Heart left ventricle (tissue), 16 donors: ENCODE measurements at regions of chr19 and their contacts with region 1.

Region 1: DNA sequence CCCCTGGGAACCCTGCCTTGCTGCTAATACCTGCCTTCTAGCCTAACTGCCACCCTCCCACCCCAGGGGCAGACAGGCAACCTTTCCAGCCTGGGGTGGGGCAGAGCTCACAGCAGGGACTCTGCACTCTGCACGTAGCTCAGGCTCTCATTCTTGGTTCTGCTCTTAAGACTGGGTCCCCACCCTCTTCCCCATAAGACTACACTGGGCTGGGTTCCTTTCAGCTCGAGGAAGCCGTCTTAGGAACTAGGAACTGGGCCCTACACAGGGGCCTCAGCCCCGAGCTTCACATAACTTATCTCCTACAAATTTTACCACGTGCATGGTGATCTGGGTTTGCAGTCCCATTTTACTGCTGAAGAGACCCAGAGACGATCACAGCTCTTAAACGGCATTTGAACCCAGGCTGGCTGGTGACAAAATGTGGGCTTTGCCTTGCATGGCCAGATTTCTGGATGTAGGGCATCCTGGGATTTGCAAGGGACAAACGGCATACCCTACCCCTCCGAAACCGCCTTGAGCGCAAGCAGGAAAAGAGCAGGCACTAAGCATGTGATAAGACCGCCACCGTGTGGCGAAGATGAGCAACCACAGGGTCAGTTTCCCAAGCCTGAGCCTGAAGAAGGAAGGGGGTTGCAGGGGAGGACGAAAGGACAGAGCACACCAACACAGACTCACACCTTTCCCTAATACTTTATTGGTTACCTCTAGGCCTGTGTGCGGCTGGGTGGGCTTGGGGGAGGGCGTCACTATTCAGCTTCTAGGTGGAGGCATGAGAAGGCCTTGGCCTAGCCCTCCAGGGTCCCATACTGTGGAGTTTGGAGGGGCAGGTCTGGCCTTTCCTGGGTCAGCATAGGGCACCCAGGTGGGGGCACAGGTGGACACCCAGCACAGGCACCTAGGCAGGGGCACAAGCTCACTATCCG is 5.1 kb downstream of the JUNB start:
- DNase-seq: peak; percentile 74 to 87 (median 79)
- ATAC-seq: peak; percentile 12 to 21 (median 15)
- H3K4me3 ChIP-seq: peak overlapping the region in 4 of 12 donors; percentile 4 to 45 (median 24)
- H3K27ac ChIP-seq: peak overlapping the region in 11 of 12 donors; percentile 42 to 100 (median 57)
- H3K4me1 ChIP-seq: peaks cover 3 to 41% (median 23%) of the 10 kb centered on the region in 12 donors
- H3K27me3 ChIP-seq: peaks cover 0 to 3% (median 0%) of the 10 kb centered on the region in 9 donors
- CTCF ChIP-seq: peak; percentile 87 to 96 (median 92)
- POLR2A ChIP-seq: no peak

Region 2: GRCh38 chr19:12711187-12711586 is 85.2 kb before region 1 on chr19:
- intact Hi-C with region 1: loop called in 1 of 10 experiments (anchors 5 kb)
- DNase-seq: no peak
- ATAC-seq: no peak
- H3K4me3 ChIP-seq: no peak overlapping the region
- H3K27ac ChIP-seq: no peak overlapping the region
- H3K4me1 ChIP-seq: no peaks in the 10 kb centered on the region
- H3K27me3 ChIP-seq: no peaks in the 10 kb centered on the region
- CTCF ChIP-seq: no peak
- POLR2A ChIP-seq: no peak

Region 3: GRCh38 chr19:12757544-12758274 is 38.7 kb before region 1 on chr19:
- intact Hi-C with region 1: loop called in 8 of 10 experiments (anchors 1 to 5 kb)
- DNase-seq: peak; percentile 66 to 85 (median 76)
- ATAC-seq: peak; percentile 33 to 83 (median 76)
- H3K4me3 ChIP-seq: peak overlapping the region in 9 of 12 donors; percentile 16 to 53 (median 40)
- H3K27ac ChIP-seq: peak overlapping the region in 9 of 12 donors; percentile 3 to 72 (median 48)
- H3K4me1 ChIP-seq: peaks cover 0 to 24% (median 15%) of the 10 kb centered on the region in 12 donors
- H3K27me3 ChIP-seq: peaks cover 0 to 4% (median 0%) of the 10 kb centered on the region in 9 donors
- CTCF ChIP-seq: peak; percentile 78 to 98 (median 92)
- POLR2A ChIP-seq: no peak

Region 4: DNA sequence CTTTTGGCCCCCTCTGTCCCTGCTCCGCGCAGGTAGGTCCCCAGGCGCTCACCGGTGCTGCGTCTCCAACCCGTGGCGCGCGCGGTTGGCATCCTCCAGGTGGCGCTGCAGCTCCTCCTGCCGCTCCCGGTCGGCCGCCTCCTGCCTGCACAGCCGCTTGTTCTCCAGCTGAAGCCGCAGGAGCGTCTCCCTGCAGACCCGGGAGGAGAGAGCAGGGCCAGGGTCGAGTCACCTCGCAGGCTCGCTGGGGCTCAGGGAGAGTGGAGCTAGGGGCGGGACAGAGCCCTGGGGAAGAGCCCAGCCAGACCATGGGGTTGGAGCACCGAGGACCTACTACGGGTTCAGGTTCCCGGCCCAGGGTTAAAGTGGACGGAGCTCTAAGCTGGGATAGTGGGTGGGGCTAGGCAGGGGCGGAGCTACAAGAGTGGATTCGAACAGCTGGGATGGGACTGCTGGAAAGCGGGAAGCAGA is 30.3 kb before region 1 on chr19:
- intact Hi-C with region 1: loop called in 8 of 10 experiments (anchors 5 kb)
- DNase-seq: peak; percentile 77 to 93 (median 88)
- ATAC-seq: peak in 3 of 4 donors; percentile 66 to 85 (median 76)
- H3K4me3 ChIP-seq: peak overlapping the region in 9 of 12 donors; percentile 14 to 61 (median 48)
- H3K27ac ChIP-seq: peak overlapping the region in 11 of 12 donors; percentile 15 to 82 (median 61)
- H3K4me1 ChIP-seq: peaks cover 0 to 39% (median 9%) of the 10 kb centered on the region in 12 donors
- H3K27me3 ChIP-seq: no peaks in the 10 kb centered on the region
- CTCF ChIP-seq: peak in 10 of 12 donors; percentile 66 to 99 (median 84)
- POLR2A ChIP-seq: peak in 1 of 2 donors; percentile 35

Region 5: GRCh38 chr19:12777217-12778016 is 19.0 kb before region 1 on chr19:
- intact Hi-C with region 1: loop called (anchors 1 to 2 kb)
- DNase-seq: peak; percentile 83 to 91 (median 87)
- ATAC-seq: peak; percentile 27 to 52 (median 40)
- H3K4me3 ChIP-seq: peak overlapping the region; percentile 41 to 83 (median 68)
- H3K27ac ChIP-seq: peak overlapping the region; percentile 78 to 99 (median 94)
- H3K4me1 ChIP-seq: peaks cover 0 to 64% (median 49%) of the 10 kb centered on the region in 12 donors
- H3K27me3 ChIP-seq: no peaks in the 10 kb centered on the region
- CTCF ChIP-seq: peak; percentile 93 to 98 (median 97)
- POLR2A ChIP-seq: peak in 1 of 2 donors; percentile 15

Region 6: DNA sequence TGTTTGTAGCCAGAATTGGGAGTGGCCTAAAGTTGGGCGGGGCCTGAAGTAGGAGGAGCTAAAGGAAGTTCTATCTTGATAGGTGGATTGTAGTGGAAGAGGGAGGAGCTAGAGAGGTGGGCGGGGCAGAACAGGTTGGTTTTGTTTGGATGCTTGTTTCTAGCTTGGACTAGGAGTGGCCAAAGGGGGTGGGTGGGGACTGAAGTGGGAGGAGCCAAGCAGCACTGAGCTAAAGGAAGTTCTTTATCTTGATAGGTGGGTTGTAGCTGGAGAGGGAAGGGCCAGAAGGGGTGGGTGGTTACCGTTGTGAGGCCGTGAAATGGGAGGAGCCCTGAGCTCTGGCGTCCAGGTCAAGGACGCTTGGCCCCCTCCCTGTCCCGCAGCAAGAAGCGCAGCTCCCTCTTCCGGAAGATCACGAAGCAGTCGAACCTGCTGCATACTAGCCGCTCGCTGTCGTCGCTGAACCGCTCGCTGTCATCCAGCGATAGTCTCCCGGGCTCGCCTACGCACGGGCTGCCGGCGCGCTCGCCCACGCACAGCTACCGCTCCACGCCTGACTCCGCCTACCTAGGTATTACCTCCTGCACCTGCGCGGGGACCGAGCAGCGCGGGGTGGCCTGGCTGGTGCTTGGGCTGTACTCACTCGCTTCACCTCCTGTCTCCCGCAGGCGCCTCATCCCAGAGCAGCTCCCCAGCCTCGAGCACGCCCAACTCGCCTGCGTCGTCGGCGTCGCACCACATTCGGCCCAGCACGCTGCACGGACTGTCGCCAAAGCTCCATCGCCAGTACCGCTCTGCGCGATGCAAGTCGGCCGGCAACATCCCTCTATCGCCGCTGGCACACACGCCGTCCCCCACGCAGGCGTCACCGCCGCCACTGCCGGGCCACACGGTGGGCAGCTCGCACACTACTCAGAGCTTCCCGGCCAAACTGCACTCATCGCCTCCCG is 76.8 kb after region 1 on chr19:
- intact Hi-C with region 1: no loop called
- DNase-seq: peak in 3 of 5 donors; percentile 46 to 67 (median 67)
- ATAC-seq: peak; percentile 46 to 80 (median 74)
- H3K4me3 ChIP-seq: peak overlapping the region in 9 of 12 donors; percentile 22 to 44 (median 32)
- H3K27ac ChIP-seq: no peak overlapping the region
- H3K4me1 ChIP-seq: peaks cover 0 to 14% (median 3%) of the 10 kb centered on the region in 12 donors
- H3K27me3 ChIP-seq: peaks cover 0 to 9% (median 0%) of the 10 kb centered on the region in 9 donors
- CTCF ChIP-seq: no peak
- POLR2A ChIP-seq: no peak